ENCODE measurements at regions of chr6 and their contacts with region 1.

Region 1: DNA sequence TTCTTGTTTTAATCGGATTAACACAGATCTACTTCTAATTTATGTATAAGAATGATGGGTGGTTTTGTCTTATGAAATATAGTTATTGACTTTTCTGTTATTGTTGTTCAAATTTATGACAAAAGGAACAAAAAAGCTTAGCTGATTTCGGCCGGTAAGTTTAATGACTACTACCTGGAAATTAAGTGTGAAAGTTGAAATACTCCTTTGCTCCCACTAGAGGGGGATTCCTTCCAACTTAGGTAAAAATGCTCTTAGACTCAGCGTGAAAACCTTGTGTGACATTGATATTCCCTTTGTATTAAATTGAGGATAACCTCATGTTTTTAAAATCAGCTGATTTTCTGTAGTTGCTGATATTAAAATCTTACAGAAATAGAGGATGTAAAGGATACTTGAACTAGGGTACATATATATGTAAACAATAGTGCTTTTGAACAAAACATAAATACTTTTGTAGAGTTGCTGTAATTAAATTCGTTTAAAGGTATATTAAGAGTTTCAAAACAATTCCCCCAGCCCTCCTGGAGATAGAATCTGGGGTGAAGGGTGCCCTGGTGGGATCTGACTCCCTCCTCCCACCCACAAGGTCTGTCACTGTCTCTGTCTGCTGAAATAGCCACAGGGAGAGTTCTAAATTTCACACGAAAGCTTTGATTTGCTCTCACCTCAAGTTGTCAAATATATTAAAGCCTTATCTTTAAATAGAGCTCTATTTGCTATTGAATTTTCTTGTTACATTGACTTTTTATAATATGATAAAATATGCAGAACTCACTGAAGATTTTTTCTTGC is 257.5 kb downstream of the ARID1B start:
- DNase-seq: peak; percentile 55
- H3K4me3 ChIP-seq: no peak overlapping the region; a peak in 1 of 4 replicates
- H3K27ac ChIP-seq: peak overlapping the region in 1 of 2 experiments; percentile 34; a peak in 2 of 4 replicates
- H3K4me1 ChIP-seq: peaks cover 11 to 23% of the 10 kb centered on the region in 2 experiments; a peak in 3 of 4 replicates
- H3K27me3 ChIP-seq: no peaks in the 10 kb centered on the region
- CTCF ChIP-seq: peak; percentile 67
- EP300 ChIP-seq: no peak
- RAD21 ChIP-seq: peak; percentile 79

Region 2: DNA sequence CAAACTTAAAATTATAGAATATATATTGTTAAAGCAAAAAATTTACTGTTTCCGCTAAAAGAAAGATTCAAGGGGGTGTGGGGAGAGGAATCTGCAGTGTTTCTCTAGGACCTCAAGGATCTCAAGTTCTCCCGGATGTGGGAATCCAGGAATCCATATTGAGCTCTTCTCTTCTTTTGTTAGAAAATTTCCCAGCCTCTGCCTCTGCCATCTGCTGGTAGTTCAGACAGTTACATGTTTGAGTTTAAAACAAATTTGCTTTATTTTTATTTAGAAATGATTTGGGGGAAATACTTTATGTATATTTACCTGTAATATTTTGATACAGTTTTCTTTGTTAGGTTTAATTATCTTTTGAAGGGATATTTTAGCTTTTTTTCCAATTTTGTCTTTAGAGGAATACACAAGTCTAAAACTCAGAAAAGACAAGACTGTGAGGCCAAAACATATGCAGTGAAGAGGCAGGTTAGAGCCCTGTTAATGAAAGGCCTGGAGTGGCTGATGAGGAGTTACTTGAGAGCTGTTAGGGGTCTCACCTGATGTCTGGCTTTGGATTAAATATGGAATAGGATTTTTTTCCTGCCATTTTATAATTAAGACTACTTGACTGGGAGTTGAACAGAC is 11.3 kb after region 1 on chr6:
- CTCF ChIA-PET with region 1: interaction called, 23 read pairs
- POLR2A ChIA-PET with region 1: no interaction called
- DNase-seq: peak; percentile 54
- H3K4me3 ChIP-seq: no peak overlapping the region
- H3K27ac ChIP-seq: peak overlapping the region; percentile 30 to 50; a peak in 3 of 4 replicates
- H3K4me1 ChIP-seq: peaks cover 11 to 16% of the 10 kb centered on the region in 2 experiments; a peak in 3 of 4 replicates
- H3K27me3 ChIP-seq: no peaks in the 10 kb centered on the region
- CTCF ChIP-seq: peak; percentile 73
- EP300 ChIP-seq: no peak
- RAD21 ChIP-seq: peak; percentile 66

Region 3: GRCh38 chr6:157158897-157159296 is 124.3 kb after region 1 on chr6:
- CTCF ChIA-PET with region 1: interaction called, 11 read pairs
- POLR2A ChIA-PET with region 1: no interaction called
- DNase-seq: no peak
- H3K4me3 ChIP-seq: no peak overlapping the region
- H3K27ac ChIP-seq: no peak overlapping the region
- H3K4me1 ChIP-seq: peaks cover 0 to 31% of the 10 kb centered on the region in 2 experiments; a peak in 2 of 4 replicates
- H3K27me3 ChIP-seq: no peaks in the 10 kb centered on the region
- CTCF ChIP-seq: 0 out of 2 replicates have a peak, but pooled peaks have one; percentile 12
- EP300 ChIP-seq: no peak
- RAD21 ChIP-seq: 0 out of 2 replicates have a peak, but pooled peaks have one; percentile 7

Region 4: GRCh38 chr6:157184202-157185020 is 149.8 kb after region 1 on chr6:
- CTCF ChIA-PET with region 1: interaction called, 28 read pairs
- POLR2A ChIA-PET with region 1: no interaction called
- DNase-seq: peak; percentile 84
- H3K4me3 ChIP-seq: peak overlapping the region in 1 of 2 experiments; percentile 39; a peak in 1 of 4 replicates
- H3K27ac ChIP-seq: no peak overlapping the region
- H3K4me1 ChIP-seq: peaks cover 0 to 29% of the 10 kb centered on the region in 2 experiments; a peak in 1 of 4 replicates
- H3K27me3 ChIP-seq: no peaks in the 10 kb centered on the region
- CTCF ChIP-seq: peak; percentile 90
- EP300 ChIP-seq: no peak
- RAD21 ChIP-seq: peak; percentile 93

Region 5: DNA sequence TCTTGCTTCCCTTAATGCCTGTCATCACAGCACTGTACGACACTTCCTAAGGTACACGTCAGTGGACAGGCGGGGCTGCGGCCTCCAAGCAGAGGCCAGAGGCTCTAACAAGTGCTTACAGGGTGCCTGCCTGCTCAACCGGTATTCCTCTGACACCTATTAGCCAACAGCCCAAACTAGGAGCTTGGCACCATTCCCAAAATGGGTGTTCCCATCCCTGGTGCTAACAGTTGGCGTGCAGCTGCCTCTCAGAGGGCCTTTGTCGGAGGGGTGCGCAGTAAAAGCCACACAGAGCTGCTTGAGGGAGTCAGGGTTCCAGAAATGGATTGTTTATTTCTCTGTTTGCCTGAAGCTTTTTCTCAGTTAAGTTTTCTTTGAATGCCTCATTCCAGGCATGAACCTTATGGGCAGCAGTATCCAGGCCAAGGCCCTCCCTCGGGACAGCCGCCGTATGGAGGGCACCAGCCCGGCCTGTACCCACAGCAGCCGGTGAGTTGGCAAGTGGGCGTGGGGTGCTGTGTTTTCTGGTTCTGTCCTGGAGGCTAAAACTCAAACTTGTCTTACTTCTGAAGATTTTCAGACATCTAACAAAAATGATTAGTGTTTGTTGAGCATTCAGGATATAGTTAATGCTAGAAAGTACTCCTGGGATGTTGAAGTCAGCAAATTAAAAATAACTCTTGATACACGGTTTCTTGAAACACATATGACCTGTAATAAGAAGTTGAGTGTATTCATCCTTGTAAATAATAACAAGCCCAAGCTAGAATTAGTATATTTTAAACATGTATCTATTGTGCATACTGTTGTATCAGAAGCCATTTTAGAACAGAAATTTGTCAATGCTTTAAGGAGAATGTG is 164.0 kb after region 1 on chr6:
- CTCF ChIA-PET with region 1: interaction called, 10 read pairs
- POLR2A ChIA-PET with region 1: no interaction called
- DNase-seq: peak; percentile 39
- H3K4me3 ChIP-seq: no peak overlapping the region
- H3K27ac ChIP-seq: no peak overlapping the region; a peak in 1 of 4 replicates
- H3K4me1 ChIP-seq: peaks cover 0 to 6% of the 10 kb centered on the region in 2 experiments; a peak in 2 of 4 replicates
- H3K27me3 ChIP-seq: no peaks in the 10 kb centered on the region
- CTCF ChIP-seq: no peak
- EP300 ChIP-seq: no peak
- RAD21 ChIP-seq: no peak

Measured in SK-N-SH (cell line).